Activated CD4-positive, alpha-beta memory T cell treated with anti-CD3 and anti-CD28 coated beads, Interleukin-2, amount 10 ng/mL, durations not matched to agents 7 days and 5 days (primary cell): ENCODE measurements at regions of chr11 and their contacts with region 1.

Region 1: GRCh38 chr11:67468835-67469811 is at the start of gene TMEM134:
- DNase-seq: peak; percentile 93
- H3K4me3 Mint-ChIP-seq: peak within 1 kb of the TSS; percentile 86
- H3K27ac Mint-ChIP-seq: peak within 1 kb of the TSS; percentile 75
- H3K4me1 Mint-ChIP-seq: peaks cover 40% of the 10 kb centered on the region
- H3K27me3 Mint-ChIP-seq: no peaks in the 10 kb centered on the region
- total RNA-seq, gene TMEM134: 36.3 to 37.6 TPM

Region 2: DNA sequence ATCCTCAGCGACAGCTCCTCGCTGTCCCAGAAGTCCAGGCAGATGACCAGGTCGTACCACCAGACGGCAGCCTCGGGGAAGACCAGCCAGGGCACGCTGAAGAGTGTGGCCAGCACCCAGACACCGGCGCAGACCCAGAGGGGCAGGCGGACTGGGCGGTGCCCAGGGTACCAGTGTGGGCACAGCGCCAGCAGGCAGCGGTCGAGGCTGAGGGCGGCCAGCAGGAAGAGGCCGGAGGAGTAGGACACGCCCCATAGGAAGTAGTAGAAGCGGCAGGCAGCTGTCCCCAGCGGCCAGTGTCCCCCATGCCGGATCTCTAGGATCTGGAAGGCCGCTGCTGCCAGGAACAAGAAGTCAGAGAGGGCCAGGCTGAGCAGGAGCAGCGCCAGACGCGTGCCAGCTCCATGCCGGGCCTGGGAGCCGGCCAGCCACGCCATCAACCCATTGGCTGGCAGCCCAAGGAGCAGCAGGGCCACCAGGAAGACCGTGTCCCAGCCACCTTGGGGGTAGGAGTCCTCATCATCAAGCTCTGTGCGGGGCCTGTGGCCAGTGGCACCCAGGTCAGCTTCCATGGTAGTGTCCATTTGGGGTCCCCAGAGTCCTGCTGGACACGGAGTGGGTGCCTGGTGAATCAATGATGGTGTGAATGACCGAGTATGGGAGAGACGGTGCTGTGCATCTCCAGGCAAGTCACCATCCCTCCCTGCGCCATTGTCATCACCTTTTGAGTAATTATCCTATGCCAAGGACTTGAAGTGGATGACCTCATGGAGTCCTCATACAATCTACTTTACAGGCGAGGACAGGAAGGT is 16.8 kb before region 1 on chr11 and contains the start of gene GPR152:
- CTCF ChIA-PET with region 1: no interaction called
- POLR2A ChIA-PET with region 1: interaction called, 10 read pairs
- DNase-seq: no peak
- H3K4me3 Mint-ChIP-seq: no peak within 1 kb of the TSS
- H3K27ac Mint-ChIP-seq: no peak within 1 kb of the TSS
- H3K4me1 Mint-ChIP-seq: peaks cover 18% of the 10 kb centered on the region
- H3K27me3 Mint-ChIP-seq: peaks cover 5% of the 10 kb centered on the region
- total RNA-seq, gene GPR152: not detected